ENCODE measurements at regions of chr15 and their contacts with region 1.

Region 1: GRCh38 chr15:75367913-75368688 is at the start of gene MAN2C1:
- DNase-seq: peak; percentile 88 to 92 (median 88)
- H3K4me3 ChIP-seq: peak within 1 kb of the TSS; percentile 76 to 91 (median 89)
- H3K27ac ChIP-seq: peak within 1 kb of the TSS; percentile 77 to 88
- H3K4me1 ChIP-seq: peaks cover 5 to 23% (median 15%) of the 10 kb centered on the region in 4 experiments
- H3K27me3 ChIP-seq: no peaks in the 10 kb centered on the region

Region 2: GRCh38 chr15:75347222-75347878 is 20.8 kb before region 1 on chr15:
- CTCF ChIA-PET with region 1: interaction called, 25 read pairs
- POLR2A ChIA-PET with region 1: interaction called, 4 read pairs
- DNase-seq: peak; percentile 55 to 89 (median 86)
- H3K4me3 ChIP-seq: peak overlapping the region; percentile 52 to 84 (median 68)
- H3K27ac ChIP-seq: no peak overlapping the region
- H3K4me1 ChIP-seq: peaks cover 7 to 44% (median 36%) of the 10 kb centered on the region in 4 experiments
- H3K27me3 ChIP-seq: peaks cover 0 to 26% (median 4%) of the 10 kb centered on the region in 5 experiments

Region 3: GRCh38 chr15:75380773-75381172 is 12.7 kb after region 1 on chr15:
- CTCF ChIA-PET with region 1: interaction called, 16 read pairs
- POLR2A ChIA-PET with region 1: no interaction called
- DNase-seq: no peak
- H3K4me3 ChIP-seq: no peak overlapping the region
- H3K27ac ChIP-seq: no peak overlapping the region
- H3K4me1 ChIP-seq: no peaks in the 10 kb centered on the region
- H3K27me3 ChIP-seq: no peaks in the 10 kb centered on the region

Region 4: GRCh38 chr15:75389791-75390382 is 21.8 kb after region 1 on chr15:
- CTCF ChIA-PET with region 1: interaction called, 13 read pairs
- POLR2A ChIA-PET with region 1: no interaction called
- DNase-seq: no peak
- H3K4me3 ChIP-seq: no peak overlapping the region
- H3K27ac ChIP-seq: no peak overlapping the region
- H3K4me1 ChIP-seq: no peaks in the 10 kb centered on the region
- H3K27me3 ChIP-seq: no peaks in the 10 kb centered on the region

Region 5: GRCh38 chr15:75451674-75452363 is 83.7 kb after region 1 on chr15 and contains the start of gene SIN3A:
- CTCF ChIA-PET with region 1: interaction called, 5 read pairs
- POLR2A ChIA-PET with region 1: interaction called, 13 read pairs
- DNase-seq: peak; percentile 100
- H3K4me3 ChIP-seq: peak within 1 kb of the TSS; percentile 84 to 97 (median 88)
- H3K27ac ChIP-seq: peak within 1 kb of the TSS; percentile 81 to 93
- H3K4me1 ChIP-seq: peaks cover 1 to 45% (median 41%) of the 10 kb centered on the region in 4 experiments
- H3K27me3 ChIP-seq: no peaks in the 10 kb centered on the region

Region 6: GRCh38 chr15:75532413-75533147 is 164.5 kb after region 1 on chr15:
- CTCF ChIA-PET with region 1: no interaction called
- POLR2A ChIA-PET with region 1: no interaction called
- DNase-seq: peak; percentile 35 to 45 (median 45)
- H3K4me3 ChIP-seq: no peak overlapping the region
- H3K27ac ChIP-seq: no peak overlapping the region
- H3K4me1 ChIP-seq: no peaks in the 10 kb centered on the region
- H3K27me3 ChIP-seq: no peaks in the 10 kb centered on the region